ENCODE measurements at regions of chr3 and their contacts with region 1.

Region 1: GRCh38 chr3:16264708-16265454 is at the starts of genes DPH3 and OXNAD1:
- DNase-seq: peak; percentile 98 to 100 (median 99)
- H3K4me3 ChIP-seq: peak within 1 kb of the TSS; percentile 88
- H3K4me3 Mint-ChIP-seq: peak within 1 kb of the TSS; percentile 93 to 99 (median 97)
- H3K27ac ChIP-seq: peak within 1 kb of the TSS; percentile 95
- H3K27ac Mint-ChIP-seq: peak within 1 kb of the TSS; percentile 95 to 100 (median 100)
- H3K4me1 ChIP-seq: peaks cover 19% of the 10 kb centered on the region
- H3K4me1 Mint-ChIP-seq: peaks cover 37 to 41% (median 38%) of the 10 kb centered on the region in 3 donors
- H3K27me3 ChIP-seq: no peaks in the 10 kb centered on the region
- H3K27me3 Mint-ChIP-seq: peaks cover 0 to 4% of the 10 kb centered on the region in 2 donors
- total RNA-seq, gene DPH3: 31.7 to 32.8 TPM
- total RNA-seq, gene OXNAD1: 28.6 to 30.1 TPM

Region 2: GRCh38 chr3:16290007-16290826 is 25.3 kb after region 1 on chr3:
- CTCF ChIA-PET with region 1: interaction called, 25 read pairs
- POLR2A ChIA-PET with region 1: interaction called, 19 read pairs
- DNase-seq: peak; percentile 31 to 66 (median 53)
- H3K4me3 ChIP-seq: peak overlapping the region; percentile 93
- H3K4me3 Mint-ChIP-seq: peak overlapping the region; percentile 84 to 98 (median 92)
- H3K27ac ChIP-seq: no peak overlapping the region
- H3K27ac Mint-ChIP-seq: peak overlapping the region; percentile 85 to 98 (median 94)
- H3K4me1 ChIP-seq: peaks cover 69% of the 10 kb centered on the region
- H3K4me1 Mint-ChIP-seq: peaks cover 69 to 90% (median 86%) of the 10 kb centered on the region in 3 donors
- H3K27me3 ChIP-seq: no peaks in the 10 kb centered on the region
- H3K27me3 Mint-ChIP-seq: no peaks in the 10 kb centered on the region

Region 3: DNA sequence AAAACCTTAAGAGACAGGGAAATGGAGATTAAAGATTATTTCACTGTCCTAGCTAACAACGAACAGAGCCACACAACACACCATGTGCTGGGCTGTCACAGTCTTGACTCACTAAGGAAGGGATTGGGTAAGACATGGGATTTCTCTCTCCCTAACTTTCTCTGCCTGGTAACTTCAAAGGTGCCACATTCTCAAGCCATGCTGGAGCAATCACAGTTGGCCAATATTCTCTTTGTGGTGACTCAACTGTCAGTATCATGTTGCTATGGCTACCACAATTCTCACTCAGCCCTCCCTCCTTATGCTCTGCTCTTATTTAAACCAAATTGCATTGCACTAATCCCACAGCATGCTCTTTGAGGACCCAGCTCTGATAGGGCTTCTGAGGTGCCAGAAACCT is 74.1 kb after region 1 on chr3:
- CTCF ChIA-PET with region 1: interaction called, 10 read pairs
- POLR2A ChIA-PET with region 1: interaction called, 4 read pairs
- DNase-seq: peak in 2 of 5 donors; percentile 34 to 59
- H3K4me3 ChIP-seq: no peak overlapping the region
- H3K4me3 Mint-ChIP-seq: peak overlapping the region in 6 of 7 donors; percentile 35 to 69 (median 46)
- H3K27ac ChIP-seq: peak overlapping the region; percentile 28
- H3K27ac Mint-ChIP-seq: peak overlapping the region; percentile 74 to 97 (median 91)
- H3K4me1 ChIP-seq: peaks cover 31% of the 10 kb centered on the region
- H3K4me1 Mint-ChIP-seq: peaks cover 61 to 81% (median 72%) of the 10 kb centered on the region in 3 donors
- H3K27me3 ChIP-seq: no peaks in the 10 kb centered on the region
- H3K27me3 Mint-ChIP-seq: peaks cover 0 to 1% of the 10 kb centered on the region in 2 donors

Region 4: DNA sequence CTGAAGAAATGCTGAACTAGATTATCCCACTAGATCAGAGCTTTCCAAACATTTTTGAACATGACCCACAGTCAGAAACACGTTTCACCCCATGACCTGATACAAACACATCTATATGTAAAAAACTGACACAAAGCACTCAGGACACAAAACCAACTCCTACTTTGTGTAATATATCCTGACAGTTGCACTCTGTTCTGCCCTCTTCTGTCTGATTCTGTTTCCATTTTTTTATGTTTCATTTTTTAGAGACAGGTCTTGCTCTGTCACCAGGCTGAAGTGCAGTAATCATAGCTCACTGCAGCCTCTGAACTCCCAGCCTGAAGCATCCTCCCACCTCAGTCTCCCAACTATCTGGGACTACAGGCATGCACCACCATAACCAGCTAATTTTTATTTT is 264.4 kb after region 1 on chr3:
- CTCF ChIA-PET with region 1: interaction called, 9 read pairs
- POLR2A ChIA-PET with region 1: interaction called, 11 read pairs
- DNase-seq: peak in 1 of 5 donors; percentile 35
- H3K4me3 ChIP-seq: no peak overlapping the region
- H3K4me3 Mint-ChIP-seq: no peak overlapping the region
- H3K27ac ChIP-seq: no peak overlapping the region
- H3K27ac Mint-ChIP-seq: peak overlapping the region in 1 of 8 donors; percentile 25
- H3K4me1 ChIP-seq: no peaks in the 10 kb centered on the region
- H3K4me1 Mint-ChIP-seq: peaks cover 6 to 10% (median 8%) of the 10 kb centered on the region in 3 donors
- H3K27me3 ChIP-seq: no peaks in the 10 kb centered on the region
- H3K27me3 Mint-ChIP-seq: no peaks in the 10 kb centered on the region

Measured in CD8-positive, alpha-beta memory T cell (primary cell).